ENCODE measurements at regions of chrX and their contacts with region 1.

Region 1: GRCh38 chrX:10189317-10190268 is 32.8 kb downstream of the CLCN4 start:
- DNase-seq: peak; percentile 68 to 70 (median 68)
- H3K4me3 ChIP-seq: no peak overlapping the region
- H3K4me3 Mint-ChIP-seq: no peak overlapping the region
- H3K27ac ChIP-seq: no peak overlapping the region
- H3K27ac Mint-ChIP-seq: peak overlapping the region in 6 of 7 donors; percentile 65 to 86 (median 80)
- H3K4me1 ChIP-seq: no peaks in the 10 kb centered on the region
- H3K4me1 Mint-ChIP-seq: peaks cover 6% of the 10 kb centered on the region
- H3K27me3 ChIP-seq: no peaks in the 10 kb centered on the region
- H3K27me3 Mint-ChIP-seq: peaks cover 0 to 8% (median 5%) of the 10 kb centered on the region in 3 donors
- CTCF ChIP-seq: peak; percentile 51

Region 2: GRCh38 chrX:10244915-10245622 is 55.5 kb after region 1 on chrX:
- intact Hi-C with region 1: no loop called
- DNase-seq: no peak
- H3K4me3 ChIP-seq: no peak overlapping the region
- H3K4me3 Mint-ChIP-seq: no peak overlapping the region
- H3K27ac ChIP-seq: no peak overlapping the region
- H3K27ac Mint-ChIP-seq: no peak overlapping the region
- H3K4me1 ChIP-seq: no peaks in the 10 kb centered on the region
- H3K4me1 Mint-ChIP-seq: no peaks in the 10 kb centered on the region
- H3K27me3 ChIP-seq: no peaks in the 10 kb centered on the region
- H3K27me3 Mint-ChIP-seq: peaks cover 0 to 7% (median 0%) of the 10 kb centered on the region in 3 donors
- CTCF ChIP-seq: no peak

Region 3: GRCh38 chrX:10615931-10616775 is 426.6 kb after region 1 on chrX:
- intact Hi-C with region 1: loop called (anchors 2 to 10 kb)
- DNase-seq: peak in 2 of 3 donors; percentile 1 to 10
- H3K4me3 ChIP-seq: no peak overlapping the region
- H3K4me3 Mint-ChIP-seq: no peak overlapping the region
- H3K27ac ChIP-seq: no peak overlapping the region
- H3K27ac Mint-ChIP-seq: no peak overlapping the region
- H3K4me1 ChIP-seq: peaks cover 7 to 13% of the 10 kb centered on the region in 2 donors
- H3K4me1 Mint-ChIP-seq: peaks cover 19% of the 10 kb centered on the region
- H3K27me3 ChIP-seq: peaks cover 50 to 56% of the 10 kb centered on the region in 2 donors
- H3K27me3 Mint-ChIP-seq: peaks cover 34 to 39% (median 39%) of the 10 kb centered on the region in 3 donors
- CTCF ChIP-seq: peak; percentile 36

Region 4: GRCh38 chrX:10722851-10723250 is 533.3 kb after region 1 on chrX:
- intact Hi-C with region 1: loop called (anchors 5 kb)
- DNase-seq: peak; percentile 12 to 23 (median 16)
- H3K4me3 ChIP-seq: no peak overlapping the region
- H3K4me3 Mint-ChIP-seq: no peak overlapping the region
- H3K27ac ChIP-seq: no peak overlapping the region
- H3K27ac Mint-ChIP-seq: no peak overlapping the region
- H3K4me1 ChIP-seq: no peaks in the 10 kb centered on the region
- H3K4me1 Mint-ChIP-seq: no peaks in the 10 kb centered on the region
- H3K27me3 ChIP-seq: no peaks in the 10 kb centered on the region
- H3K27me3 Mint-ChIP-seq: peaks cover 0 to 2% (median under 1%) of the 10 kb centered on the region in 3 donors
- CTCF ChIP-seq: peak; percentile 69

Region 5: DNA sequence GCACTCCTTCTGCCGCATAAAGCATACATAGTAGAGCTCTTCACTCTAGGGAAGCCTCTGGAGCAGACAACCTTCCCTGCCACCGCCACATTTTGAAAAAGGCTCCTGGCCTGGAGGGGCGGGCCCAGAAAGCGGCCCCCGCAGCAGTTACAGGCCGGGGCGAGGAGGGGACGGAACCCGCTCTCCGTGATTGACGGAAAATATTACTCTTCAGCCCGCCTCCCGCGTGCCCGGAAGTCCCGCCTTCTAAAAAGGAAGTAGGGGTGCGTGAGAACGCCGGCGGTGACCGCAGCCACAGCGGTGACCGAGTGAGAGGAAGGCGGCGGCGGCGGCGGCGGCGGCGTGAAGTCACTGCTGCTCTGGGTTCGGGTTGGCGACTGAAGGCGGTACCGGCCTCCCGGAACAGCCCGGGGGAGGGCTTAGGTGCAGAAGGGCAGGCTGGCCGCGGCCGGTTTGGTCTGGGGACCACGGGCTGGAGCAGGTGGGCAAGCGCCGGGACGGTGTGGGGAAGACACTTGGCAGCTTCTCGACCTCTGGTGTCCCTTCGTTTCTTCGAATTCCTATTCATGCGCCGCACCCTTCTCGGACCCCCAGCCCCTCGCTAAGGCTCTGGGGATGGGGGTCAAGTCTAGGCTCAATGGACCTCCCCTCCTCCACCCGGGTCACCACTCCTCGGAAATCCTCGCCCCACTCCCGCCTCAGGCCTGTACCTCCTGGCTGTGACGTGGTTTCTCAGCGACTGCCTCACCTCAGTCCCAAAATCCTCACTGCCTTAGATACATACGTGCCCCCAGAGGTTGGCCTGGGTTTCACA is 921.7 kb after region 1 on chrX and contains the start of gene HCCS:
- intact Hi-C with region 1: loop called in 1 of 2 experiments (anchors 10 kb)
- DNase-seq: peak; percentile 82 to 91 (median 86)
- H3K4me3 ChIP-seq: peak within 1 kb of the TSS; percentile 60 to 88 (median 71)
- H3K4me3 Mint-ChIP-seq: peak within 1 kb of the TSS; percentile 84 to 91
- H3K27ac ChIP-seq: peak within 1 kb of the TSS; percentile 97 to 98
- H3K27ac Mint-ChIP-seq: peak within 1 kb of the TSS; percentile 91 to 98 (median 96)
- H3K4me1 ChIP-seq: peaks cover 32 to 35% of the 10 kb centered on the region in 2 donors
- H3K4me1 Mint-ChIP-seq: peaks cover 33% of the 10 kb centered on the region
- H3K27me3 ChIP-seq: no peaks in the 10 kb centered on the region
- H3K27me3 Mint-ChIP-seq: peaks cover 0 to 2% (median 0%) of the 10 kb centered on the region in 3 donors
- CTCF ChIP-seq: no peak
- polyA plus RNA-seq, gene HCCS: 15.2 to 52.2 (median 38.9) TPM

Region 6: DNA sequence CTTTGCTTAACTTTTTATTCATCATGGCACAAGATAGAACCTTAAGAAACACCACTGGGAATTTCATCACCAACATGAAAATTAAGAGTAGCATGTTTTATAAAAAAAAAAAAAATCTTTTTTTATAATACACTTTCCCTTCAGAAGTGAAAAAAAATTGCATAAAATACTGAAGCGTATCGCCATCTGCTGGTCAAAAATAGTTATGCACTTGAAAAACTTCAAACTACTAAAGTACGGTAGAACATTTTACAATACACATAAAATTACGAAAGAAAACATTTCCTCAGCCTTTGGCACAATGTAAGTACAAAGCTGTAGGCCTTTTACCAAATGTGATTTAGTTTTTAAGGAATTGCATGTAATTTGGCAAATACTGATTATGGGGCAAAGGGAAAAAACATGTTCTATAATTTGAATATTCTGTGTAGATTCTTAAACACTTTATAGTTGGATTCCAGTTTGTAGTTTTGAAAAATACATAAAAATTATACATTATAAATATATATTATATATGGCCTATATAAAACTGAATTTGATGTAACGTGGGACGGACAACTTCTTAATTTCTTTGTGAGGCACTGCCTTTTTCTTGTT is 948.0 kb after region 1 on chrX:
- intact Hi-C with region 1: loop called in 1 of 2 experiments (anchors 10 kb)
- DNase-seq: peak; percentile 26 to 48 (median 27)
- H3K4me3 ChIP-seq: no peak overlapping the region
- H3K4me3 Mint-ChIP-seq: no peak overlapping the region
- H3K27ac ChIP-seq: no peak overlapping the region
- H3K27ac Mint-ChIP-seq: no peak overlapping the region
- H3K4me1 ChIP-seq: peaks cover 0 to 3% of the 10 kb centered on the region in 2 donors
- H3K4me1 Mint-ChIP-seq: peaks cover 2% of the 10 kb centered on the region
- H3K27me3 ChIP-seq: peaks cover 2 to 11% of the 10 kb centered on the region in 2 donors
- H3K27me3 Mint-ChIP-seq: peaks cover 0 to 16% (median 2%) of the 10 kb centered on the region in 3 donors
- CTCF ChIP-seq: peak; percentile 70

Region 7: DNA sequence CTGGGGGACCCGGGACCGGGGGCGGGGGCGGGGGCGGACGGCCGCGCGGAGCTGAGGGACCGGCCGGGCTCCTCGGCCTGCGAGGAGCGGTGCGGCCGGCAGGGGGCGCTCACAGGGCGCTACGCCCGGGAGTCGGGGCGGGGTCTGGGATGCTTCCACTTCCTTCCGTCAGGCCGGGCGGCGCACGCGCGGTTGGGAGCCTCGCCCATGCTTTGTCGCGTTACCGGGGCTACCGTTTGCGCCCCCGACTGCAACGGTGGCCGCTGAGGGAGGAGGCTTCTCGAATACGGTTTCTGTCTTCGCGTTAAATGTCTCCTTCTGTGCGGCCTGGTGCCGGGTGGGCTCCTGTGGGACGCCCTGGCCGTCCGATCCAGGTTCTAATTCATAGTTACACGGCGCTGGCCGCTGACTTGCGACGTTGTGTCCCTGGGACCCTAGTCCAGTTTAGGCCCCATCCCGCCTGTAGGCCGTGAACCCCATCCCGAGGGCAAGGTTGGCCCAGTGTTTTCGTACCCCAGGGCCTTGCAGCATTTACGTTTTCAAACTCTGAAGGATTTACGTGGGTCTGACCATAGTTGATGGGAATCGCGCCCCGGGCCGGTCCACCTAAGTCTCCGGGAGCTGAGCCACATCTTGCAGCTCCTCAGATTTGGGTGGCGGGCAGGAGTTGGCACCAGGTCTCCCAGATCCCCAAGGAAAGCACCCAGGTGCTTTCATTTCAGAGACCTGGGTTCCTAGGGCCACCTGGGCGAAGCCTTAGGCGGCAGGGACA is 1569.0 kb after region 1 on chrX:
- intact Hi-C with region 1: loop called in 1 of 2 experiments (anchors 10 kb)
- DNase-seq: peak; percentile 73 to 82 (median 81)
- H3K4me3 ChIP-seq: peak overlapping the region; percentile 83 to 96 (median 92)
- H3K4me3 Mint-ChIP-seq: peak overlapping the region; percentile 94 to 96
- H3K27ac ChIP-seq: peak overlapping the region; percentile 87 to 97
- H3K27ac Mint-ChIP-seq: peak overlapping the region; percentile 94 to 99 (median 98)
- H3K4me1 ChIP-seq: peaks cover 27 to 34% of the 10 kb centered on the region in 2 donors
- H3K4me1 Mint-ChIP-seq: peaks cover 29% of the 10 kb centered on the region
- H3K27me3 ChIP-seq: no peaks in the 10 kb centered on the region
- H3K27me3 Mint-ChIP-seq: peaks cover 0 to 3% (median 2%) of the 10 kb centered on the region in 3 donors
- CTCF ChIP-seq: peak; percentile 78

Measured in CD14-positive monocyte (primary cell).